ENCODE measurements at regions of chr7 and their contacts with region 1.

Region 1: GRCh38 chr7:36318116-36318515 is 71.5 kb upstream of the ANLN start:
- DNase-seq: no peak
- ATAC-seq: no peak
- H3K4me3 Mint-ChIP-seq: no peak overlapping the region
- H3K27ac Mint-ChIP-seq: no peak overlapping the region
- H3K4me1 Mint-ChIP-seq: no peaks in the 10 kb centered on the region
- H3K27me3 Mint-ChIP-seq: no peaks in the 10 kb centered on the region
- CTCF ChIP-seq: no peak

Region 2: GRCh38 chr7:35985126-35985754 is 332.9 kb before region 1 on chr7:
- CTCF ChIA-PET with region 1: interaction called, 44 read pairs
- POLR2A ChIA-PET with region 1: interaction called, 4 read pairs
- intact Hi-C with region 1: no loop called
- DNase-seq: peak; percentile 83
- ATAC-seq: peak; percentile 100
- H3K4me3 Mint-ChIP-seq: no peak overlapping the region
- H3K27ac Mint-ChIP-seq: no peak overlapping the region
- H3K4me1 Mint-ChIP-seq: no peaks in the 10 kb centered on the region
- H3K27me3 Mint-ChIP-seq: no peaks in the 10 kb centered on the region
- CTCF ChIP-seq: peak; percentile 79

Region 3: GRCh38 chr7:36021367-36021766 is 296.7 kb before region 1 on chr7:
- CTCF ChIA-PET with region 1: interaction called, 16 read pairs
- POLR2A ChIA-PET with region 1: no interaction called
- intact Hi-C with region 1: no loop called
- DNase-seq: peak; percentile 15
- ATAC-seq: no peak
- H3K4me3 Mint-ChIP-seq: no peak overlapping the region
- H3K27ac Mint-ChIP-seq: no peak overlapping the region
- H3K4me1 Mint-ChIP-seq: no peaks in the 10 kb centered on the region
- H3K27me3 Mint-ChIP-seq: no peaks in the 10 kb centered on the region
- CTCF ChIP-seq: peak; percentile 17

Region 4: GRCh38 chr7:36272567-36273269 is 45.4 kb before region 1 on chr7:
- CTCF ChIA-PET with region 1: interaction called, 24 read pairs
- POLR2A ChIA-PET with region 1: no interaction called
- intact Hi-C with region 1: no loop called
- DNase-seq: no peak
- ATAC-seq: no peak
- H3K4me3 Mint-ChIP-seq: no peak overlapping the region
- H3K27ac Mint-ChIP-seq: no peak overlapping the region
- H3K4me1 Mint-ChIP-seq: no peaks in the 10 kb centered on the region
- H3K27me3 Mint-ChIP-seq: no peaks in the 10 kb centered on the region
- CTCF ChIP-seq: no peak

Region 5: DNA sequence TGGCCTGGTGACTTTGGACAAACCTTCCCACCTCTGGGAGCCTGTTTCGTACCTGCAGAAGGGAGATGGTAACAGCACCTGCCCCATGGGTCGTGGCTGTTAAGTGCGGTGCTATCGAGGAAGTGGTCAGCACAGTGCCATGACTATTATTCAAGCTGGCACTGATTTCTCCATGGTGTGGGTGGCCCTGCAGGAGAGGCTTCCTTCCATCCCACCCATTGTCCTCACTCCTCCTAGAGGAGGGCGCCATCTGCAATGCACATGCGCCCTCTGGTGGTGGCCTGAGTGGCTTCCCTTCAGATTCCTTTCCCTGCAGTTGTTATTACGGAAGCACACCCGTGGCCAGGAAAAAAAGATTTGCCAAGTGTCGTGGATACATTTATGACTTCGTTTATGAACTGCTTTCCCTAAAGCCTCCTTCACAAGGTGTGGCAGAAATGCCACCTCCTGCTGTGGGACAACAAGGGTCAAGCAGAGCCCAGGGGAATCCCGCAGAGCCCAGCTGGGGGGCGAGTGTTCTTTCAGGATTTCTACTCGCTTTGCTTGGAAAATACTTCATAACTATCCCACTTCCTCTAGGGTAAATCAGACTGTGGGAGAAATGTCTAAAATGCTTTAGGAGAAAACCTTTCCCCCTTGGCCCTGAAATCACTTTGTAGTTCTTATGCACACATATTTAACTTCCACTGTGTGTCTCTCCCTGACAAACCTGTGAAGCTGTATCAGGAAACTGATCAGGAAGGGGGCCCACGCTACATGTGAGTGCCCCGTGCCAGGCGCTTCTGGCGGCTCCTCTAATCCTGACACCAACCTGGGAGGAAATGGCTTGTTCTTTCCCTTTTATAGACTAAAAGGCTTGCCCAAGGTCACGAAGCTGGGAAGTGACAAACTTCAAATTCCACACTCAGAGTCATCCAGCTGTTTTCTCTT is 26.5 kb before region 1 on chr7:
- CTCF ChIA-PET with region 1: interaction called, 18 read pairs
- POLR2A ChIA-PET with region 1: no interaction called
- intact Hi-C with region 1: no loop called
- DNase-seq: peak; percentile 82
- ATAC-seq: peak; percentile 54
- H3K4me3 Mint-ChIP-seq: peak overlapping the region; percentile 55
- H3K27ac Mint-ChIP-seq: no peak overlapping the region
- H3K4me1 Mint-ChIP-seq: peaks cover 30% of the 10 kb centered on the region
- H3K27me3 Mint-ChIP-seq: no peaks in the 10 kb centered on the region
- CTCF ChIP-seq: peak; percentile 95

Region 6: DNA sequence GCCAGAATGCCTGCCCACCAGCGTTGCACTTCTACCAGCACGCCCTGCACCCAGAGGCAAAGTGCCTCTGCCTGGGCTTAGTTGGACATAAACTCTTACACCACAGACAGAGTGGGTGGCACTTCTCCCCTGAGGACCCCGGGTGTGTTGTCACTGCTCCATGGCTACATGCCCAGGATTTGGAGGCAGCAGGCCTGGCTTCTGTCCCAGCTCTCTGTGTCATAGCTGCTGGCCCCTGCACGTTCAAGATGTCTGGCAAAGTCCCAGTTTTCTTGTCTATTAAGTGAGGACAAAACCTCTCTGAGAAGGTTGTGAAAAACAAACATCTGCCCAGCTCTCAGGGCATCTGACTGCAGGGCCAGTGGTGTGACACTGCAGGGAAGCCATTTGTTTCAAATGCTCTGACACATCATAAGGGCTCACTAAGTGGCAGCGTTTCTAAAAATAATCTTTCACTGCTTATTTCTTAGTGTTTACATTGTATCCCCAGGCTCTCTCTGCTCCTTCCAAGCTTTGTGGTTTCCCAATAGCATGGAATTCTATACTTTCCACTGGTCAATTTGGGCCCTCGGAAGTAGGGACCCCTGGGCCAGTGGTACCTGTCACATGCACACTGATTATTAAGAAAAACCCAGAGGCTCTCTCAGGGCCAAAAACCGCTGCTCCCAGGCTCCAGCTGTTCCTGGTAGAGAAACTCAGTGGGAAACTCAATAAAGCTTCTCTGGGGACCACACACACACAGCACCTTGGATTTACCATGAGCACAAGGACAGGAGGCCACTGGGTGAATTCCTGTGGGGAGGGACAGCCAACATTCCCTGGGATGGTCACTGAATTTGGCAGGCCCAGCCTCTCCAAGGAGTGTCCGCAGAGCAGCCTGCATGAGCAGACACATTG is 14.7 kb before region 1 on chr7:
- CTCF ChIA-PET with region 1: interaction called, 63 read pairs
- POLR2A ChIA-PET with region 1: no interaction called
- intact Hi-C with region 1: no loop called
- DNase-seq: no peak
- ATAC-seq: no peak
- H3K4me3 Mint-ChIP-seq: no peak overlapping the region
- H3K27ac Mint-ChIP-seq: no peak overlapping the region
- H3K4me1 Mint-ChIP-seq: no peaks in the 10 kb centered on the region
- H3K27me3 Mint-ChIP-seq: no peaks in the 10 kb centered on the region
- CTCF ChIP-seq: no peak

Region 7: DNA sequence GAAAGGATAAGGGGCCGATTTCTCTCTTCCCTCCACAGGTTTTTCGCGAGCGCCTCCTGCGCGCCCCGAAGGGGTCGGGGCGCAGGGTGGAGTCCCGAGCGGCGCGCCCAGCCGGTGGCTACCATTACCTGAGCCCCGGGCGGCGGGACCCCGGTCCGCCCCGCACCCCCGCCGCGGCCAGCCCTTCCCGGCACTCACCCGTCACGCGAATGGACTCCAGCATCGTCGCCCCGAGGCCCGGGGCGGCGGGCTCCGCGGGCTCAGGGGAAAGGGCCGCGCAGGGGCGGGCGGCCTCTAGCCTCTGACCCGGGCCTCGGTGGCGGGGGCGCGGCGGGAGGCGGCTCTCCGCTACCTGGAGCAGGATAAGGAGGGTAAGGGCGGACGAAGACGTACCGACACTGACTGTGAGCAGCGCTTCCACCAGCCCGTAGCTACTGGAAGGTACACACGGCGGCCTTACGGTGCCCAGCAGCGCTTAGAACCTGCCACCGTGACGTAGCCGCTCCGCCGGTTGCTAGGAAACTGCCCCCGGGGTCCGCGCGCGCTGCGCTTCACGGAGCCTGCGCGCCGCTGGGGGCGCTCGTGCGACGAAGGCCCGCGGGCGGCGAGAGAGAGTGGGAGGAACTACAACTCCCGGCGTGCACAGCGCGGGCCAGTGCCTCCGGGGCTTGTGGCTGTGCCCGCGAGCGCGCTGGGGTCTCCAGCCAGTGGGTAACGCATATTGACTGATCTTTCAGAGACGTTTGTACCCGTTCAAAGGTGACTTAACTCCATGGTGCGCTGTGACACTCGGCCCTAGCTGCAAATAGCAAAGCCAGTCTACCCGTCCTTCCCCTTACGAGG is 48.8 kb after region 1 on chr7:
- CTCF ChIA-PET with region 1: interaction called, 11 read pairs
- POLR2A ChIA-PET with region 1: no interaction called
- intact Hi-C with region 1: no loop called
- DNase-seq: peak; percentile 93
- ATAC-seq: peak; percentile 98
- H3K4me3 Mint-ChIP-seq: peak overlapping the region; percentile 87
- H3K27ac Mint-ChIP-seq: peak overlapping the region; percentile 77
- H3K4me1 Mint-ChIP-seq: no peaks in the 10 kb centered on the region
- H3K27me3 Mint-ChIP-seq: no peaks in the 10 kb centered on the region
- CTCF ChIP-seq: peak; percentile 89

Region 8: DNA sequence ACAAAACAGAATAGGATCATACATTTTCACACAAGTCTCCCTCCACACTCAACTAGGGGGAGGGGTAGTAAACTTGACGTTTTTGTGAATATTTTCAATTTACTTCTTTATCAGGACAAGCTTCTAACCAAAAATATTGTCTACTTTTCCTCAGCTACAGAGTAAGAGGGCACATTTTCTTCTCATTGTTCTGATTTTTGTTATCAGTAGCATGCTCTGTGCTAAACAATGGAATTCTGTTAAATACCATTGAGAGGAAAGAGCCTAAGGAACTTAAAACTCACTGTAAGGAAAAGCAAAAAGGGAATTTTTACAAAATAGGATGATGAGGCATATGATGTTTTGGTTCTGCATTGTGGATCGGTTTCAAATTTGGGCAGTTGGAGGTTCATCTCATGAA is 112.8 kb after region 1 on chr7:
- CTCF ChIA-PET with region 1: no interaction called
- POLR2A ChIA-PET with region 1: no interaction called
- intact Hi-C with region 1: no loop called
- DNase-seq: no peak
- ATAC-seq: no peak
- H3K4me3 Mint-ChIP-seq: no peak overlapping the region
- H3K27ac Mint-ChIP-seq: no peak overlapping the region
- H3K4me1 Mint-ChIP-seq: no peaks in the 10 kb centered on the region
- H3K27me3 Mint-ChIP-seq: no peaks in the 10 kb centered on the region
- CTCF ChIP-seq: no peak

Measured in activated CD8-positive, alpha-beta T cell treated with anti-CD3 and anti-CD28 coated beads for 36 hours (primary cell).